HCT116 (cell line): ENCODE measurements at regions of chr1 and their contacts with region 1.

Region 1: GRCh38 chr1:231357831-231358354 is 19.8 kb downstream of the SPRTN start:
- DNase-seq: peak; percentile 48
- ATAC-seq: peak; percentile 88
- H3K4me3 ChIP-seq: no peak overlapping the region
- H3K27ac ChIP-seq: peak overlapping the region; percentile 25; the same call in 1 of the 2 replicates
- H3K4me1 ChIP-seq: peaks cover 0 to 3% of the 10 kb centered on the region in 2 experiments; a peak in 1 of 4 replicates
- H3K27me3 ChIP-seq: no peaks in the 10 kb centered on the region
- CTCF ChIP-seq: peak; percentile 65 to 87 (median 85)
- POLR2A ChIP-seq: no peak
- RAD21 ChIP-seq: peak; percentile 93

Region 2: GRCh38 chr1:231284441-231284840 is 73.5 kb before region 1 on chr1:
- CTCF ChIA-PET with region 1: no interaction called
- POLR2A ChIA-PET with region 1: no interaction called
- RAD21 ChIA-PET with region 1: no interaction called
- intact Hi-C with region 1: no loop called
- DNase-seq: no peak
- ATAC-seq: no peak
- H3K4me3 ChIP-seq: no peak overlapping the region
- H3K27ac ChIP-seq: no peak overlapping the region
- H3K4me1 ChIP-seq: peaks cover 0 to under 1% of the 10 kb centered on the region in 2 experiments; a peak in 1 of 4 replicates
- H3K27me3 ChIP-seq: no peaks in the 10 kb centered on the region
- CTCF ChIP-seq: no peak
- POLR2A ChIP-seq: no peak
- RAD21 ChIP-seq: no peak

Region 3: DNA sequence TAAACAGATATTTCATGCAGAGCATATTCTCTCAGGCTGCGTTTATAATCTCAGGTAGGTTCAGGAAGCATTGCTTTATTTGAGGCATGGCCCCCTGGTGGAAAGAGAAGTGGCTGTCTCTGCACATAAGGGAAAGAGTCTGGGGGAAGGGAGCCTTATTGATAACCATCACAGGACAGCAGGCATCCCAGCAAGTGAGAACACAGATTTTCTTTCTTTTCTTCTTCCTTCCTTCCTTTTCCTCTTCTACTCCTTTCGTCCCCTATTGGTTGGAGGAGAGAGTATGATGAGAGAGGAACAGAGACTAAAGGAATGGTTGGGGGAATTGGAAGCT is 192.5 kb after region 1 on chr1:
- CTCF ChIA-PET with region 1: no interaction called
- POLR2A ChIA-PET with region 1: no interaction called
- RAD21 ChIA-PET with region 1: no interaction called
- intact Hi-C with region 1: loop called (anchors 1 kb)
- DNase-seq: peak; percentile 16
- ATAC-seq: peak; percentile 92
- H3K4me3 ChIP-seq: no peak overlapping the region
- H3K27ac ChIP-seq: no peak overlapping the region
- H3K4me1 ChIP-seq: no peaks in the 10 kb centered on the region
- H3K27me3 ChIP-seq: no peaks in the 10 kb centered on the region
- CTCF ChIP-seq: peak in 2 of 3 experiments; percentile 70 to 72; a peak in 4 of 6 replicates
- POLR2A ChIP-seq: no peak
- RAD21 ChIP-seq: peak; percentile 27

Region 4: DNA sequence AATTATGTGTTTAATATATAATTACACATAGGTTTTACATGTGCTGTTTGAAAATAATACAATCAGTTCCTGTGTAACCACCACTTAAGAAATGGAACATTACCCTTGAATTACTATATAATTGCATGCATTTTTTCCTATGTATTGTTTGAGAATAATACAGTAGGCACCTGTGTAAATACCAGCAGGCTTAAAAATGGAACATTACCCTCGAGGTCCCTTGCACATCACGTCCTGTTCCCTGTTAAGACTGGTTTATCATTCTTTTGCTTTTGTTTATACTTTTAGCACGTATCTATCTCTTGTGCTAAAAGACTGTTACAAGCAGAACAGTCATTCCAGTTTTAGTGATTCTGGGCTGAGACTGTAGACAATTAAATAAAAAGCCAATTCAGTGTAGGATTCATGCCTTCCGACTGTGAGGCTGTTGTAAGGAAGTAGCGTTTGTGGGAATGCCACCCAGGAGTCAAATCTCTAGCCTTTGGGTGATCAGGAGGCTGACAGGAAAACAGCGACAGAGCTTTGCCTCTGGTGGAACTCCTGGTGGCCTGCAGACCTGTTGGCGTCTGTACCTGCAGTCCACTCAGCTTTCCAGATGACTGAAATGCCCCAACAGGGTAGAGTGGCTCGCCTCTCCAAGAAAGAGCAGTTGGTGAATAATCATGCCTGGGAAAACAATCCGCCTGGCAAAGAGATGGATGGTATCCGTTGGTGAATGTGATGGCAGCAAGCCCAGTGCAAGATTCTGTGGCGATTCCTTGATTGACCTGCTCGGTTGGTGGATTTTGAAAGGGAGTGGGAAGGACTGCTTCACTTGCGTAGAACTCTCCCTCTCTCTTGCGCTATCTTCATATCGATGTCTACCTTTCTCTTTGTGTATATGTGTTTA is 326.7 kb after region 1 on chr1:
- CTCF ChIA-PET with region 1: no interaction called
- POLR2A ChIA-PET with region 1: no interaction called
- RAD21 ChIA-PET with region 1: no interaction called
- intact Hi-C with region 1: no loop called
- DNase-seq: no peak
- ATAC-seq: no peak
- H3K4me3 ChIP-seq: no peak overlapping the region
- H3K27ac ChIP-seq: no peak overlapping the region
- H3K4me1 ChIP-seq: no peaks in the 10 kb centered on the region
- H3K27me3 ChIP-seq: no peaks in the 10 kb centered on the region
- CTCF ChIP-seq: no peak
- POLR2A ChIP-seq: no peak
- RAD21 ChIP-seq: no peak